ENCODE measurements at regions of chr7 and their contacts with region 1.

Region 1: DNA sequence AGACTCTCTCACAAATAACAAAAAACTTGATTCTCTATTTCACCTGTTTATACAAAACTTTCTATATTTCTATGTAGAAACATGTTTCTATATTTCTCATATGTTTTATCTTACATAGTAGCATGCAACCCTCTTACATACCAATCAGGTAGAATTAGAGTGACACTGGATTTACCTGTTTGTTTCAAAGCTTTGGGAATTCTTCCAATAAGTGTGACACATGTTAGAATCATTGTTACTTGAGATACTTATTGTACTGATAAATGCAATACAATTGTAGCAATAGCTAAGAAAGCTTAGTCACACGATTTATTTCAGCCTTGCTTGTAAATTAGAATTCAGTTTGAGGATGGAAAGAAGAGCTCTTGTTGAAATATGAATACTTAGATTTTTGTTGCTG is 4.9 kb downstream of the HYAL4 start:
- DNase-seq: peak; percentile 63
- H3K4me3 ChIP-seq: no peak overlapping the region
- H3K27ac ChIP-seq: no peak overlapping the region
- H3K4me1 ChIP-seq: peaks cover 33% of the 10 kb centered on the region
- H3K27me3 ChIP-seq: no peaks in the 10 kb centered on the region
- CTCF ChIP-seq: no peak

Region 2: GRCh38 chr7:123792547-123792946 is 57.3 kb before region 1 on chr7:
- CTCF ChIA-PET with region 1: no interaction called
- dilution Hi-C with region 1: no loop called
- in situ Hi-C with region 1: no loop called
- intact Hi-C with region 1: no loop called
- DNase-seq: no peak
- H3K4me3 ChIP-seq: no peak overlapping the region
- H3K27ac ChIP-seq: no peak overlapping the region
- H3K4me1 ChIP-seq: peaks cover 6% of the 10 kb centered on the region
- H3K27me3 ChIP-seq: no peaks in the 10 kb centered on the region
- CTCF ChIP-seq: no peak

Region 3: GRCh38 chr7:123805287-123805686 is 44.6 kb before region 1 on chr7:
- CTCF ChIA-PET with region 1: no interaction called
- dilution Hi-C with region 1: no loop called
- in situ Hi-C with region 1: loop called in 1 of 2 experiments (anchors 5 kb)
- intact Hi-C with region 1: no loop called
- DNase-seq: no peak
- H3K4me3 ChIP-seq: no peak overlapping the region
- H3K27ac ChIP-seq: no peak overlapping the region
- H3K4me1 ChIP-seq: no peaks in the 10 kb centered on the region
- H3K27me3 ChIP-seq: no peaks in the 10 kb centered on the region
- CTCF ChIP-seq: no peak